Endothelial cell of umbilical vein (primary cell): ENCODE measurements at regions of chr10 and their contacts with region 1.

Region 1: DNA sequence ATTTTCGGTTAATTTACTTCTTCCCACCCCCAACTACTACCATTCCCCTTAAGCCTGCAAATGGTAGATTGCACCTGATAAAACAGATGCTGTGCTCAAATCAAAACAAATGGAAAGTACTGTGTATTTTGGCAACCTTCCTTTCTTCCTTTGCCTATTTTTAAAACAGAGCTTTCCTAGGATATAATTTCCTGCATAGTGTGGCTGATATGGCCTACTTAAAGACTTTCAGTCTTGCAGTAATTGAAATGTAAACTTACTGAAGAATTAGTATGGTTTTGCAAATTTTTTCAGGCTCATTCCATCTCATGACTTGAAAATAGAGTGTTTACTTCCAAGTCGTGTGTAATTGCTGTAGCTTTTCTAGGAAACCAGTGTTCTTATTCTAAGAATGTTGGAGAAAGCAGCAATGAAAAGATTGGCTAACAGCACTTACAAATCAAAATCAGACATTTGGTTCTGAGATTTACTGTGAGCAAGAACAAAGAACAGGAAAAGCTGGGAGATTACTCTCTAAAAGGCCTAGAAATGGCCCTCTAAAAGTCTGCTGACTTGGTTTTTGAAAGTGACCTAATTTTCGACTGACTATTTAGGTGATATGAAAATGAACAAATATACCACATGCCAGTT is 52.0 kb downstream of the REEP3 start:
- DNase-seq: peak; percentile 95
- H3K4me3 ChIP-seq: peak overlapping the region in 1 of 3 experiments; percentile 16
- H3K27ac ChIP-seq: peak overlapping the region; percentile 68
- H3K4me1 ChIP-seq: peaks cover 33% of the 10 kb centered on the region
- H3K27me3 ChIP-seq: no peaks in the 10 kb centered on the region
- CTCF ChIP-seq: no peak
- POLR2A ChIP-seq: no peak

Region 2: DNA sequence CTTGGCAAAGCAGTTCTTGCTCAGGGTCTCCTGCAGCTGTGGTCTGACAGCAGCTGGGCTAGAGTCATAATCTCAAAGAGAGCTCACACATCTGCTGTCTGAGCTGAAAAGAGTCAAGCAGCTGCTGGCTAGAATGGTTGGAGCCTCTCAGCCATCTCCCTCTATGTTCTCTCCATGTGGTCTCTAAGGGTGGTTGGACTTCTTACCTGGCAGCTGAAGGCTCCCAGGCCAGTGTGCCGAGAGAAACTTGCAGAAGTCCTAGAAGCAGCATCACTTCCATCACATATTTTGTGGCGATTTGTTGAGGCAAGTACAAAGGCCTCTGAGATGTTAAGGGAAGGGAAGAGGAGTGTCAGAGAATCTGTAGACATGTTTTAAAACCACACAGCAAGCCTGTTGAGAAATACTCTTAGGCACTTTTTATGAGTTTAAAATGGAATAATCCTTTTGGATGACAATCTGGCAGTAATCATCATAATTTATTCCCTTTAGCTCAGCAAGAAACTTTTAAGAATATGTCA is 41.2 kb after region 1 on chr10:
- CTCF ChIA-PET with region 1: interaction called, 3 read pairs
- POLR2A ChIA-PET with region 1: interaction called, 3 read pairs
- dilution Hi-C with region 1: no loop called
- intact Hi-C with region 1: loop called (anchors 5 kb)
- DNase-seq: no peak
- H3K4me3 ChIP-seq: no peak overlapping the region
- H3K27ac ChIP-seq: no peak overlapping the region
- H3K4me1 ChIP-seq: peaks cover 6% of the 10 kb centered on the region
- H3K27me3 ChIP-seq: no peaks in the 10 kb centered on the region
- CTCF ChIP-seq: no peak
- POLR2A ChIP-seq: no peak

Region 3: GRCh38 chr10:63692220-63692896 is 119.2 kb after region 1 on chr10:
- CTCF ChIA-PET with region 1: no interaction called
- POLR2A ChIA-PET with region 1: no interaction called
- dilution Hi-C with region 1: no loop called
- intact Hi-C with region 1: no loop called
- DNase-seq: peak; percentile 65
- H3K4me3 ChIP-seq: no peak overlapping the region
- H3K27ac ChIP-seq: no peak overlapping the region
- H3K4me1 ChIP-seq: peaks cover 8% of the 10 kb centered on the region
- H3K27me3 ChIP-seq: no peaks in the 10 kb centered on the region
- CTCF ChIP-seq: no peak
- POLR2A ChIP-seq: no peak